Endothelial cell of umbilical vein (primary cell): ENCODE measurements at regions of chr11 and their contacts with region 1.

Region 1: DNA sequence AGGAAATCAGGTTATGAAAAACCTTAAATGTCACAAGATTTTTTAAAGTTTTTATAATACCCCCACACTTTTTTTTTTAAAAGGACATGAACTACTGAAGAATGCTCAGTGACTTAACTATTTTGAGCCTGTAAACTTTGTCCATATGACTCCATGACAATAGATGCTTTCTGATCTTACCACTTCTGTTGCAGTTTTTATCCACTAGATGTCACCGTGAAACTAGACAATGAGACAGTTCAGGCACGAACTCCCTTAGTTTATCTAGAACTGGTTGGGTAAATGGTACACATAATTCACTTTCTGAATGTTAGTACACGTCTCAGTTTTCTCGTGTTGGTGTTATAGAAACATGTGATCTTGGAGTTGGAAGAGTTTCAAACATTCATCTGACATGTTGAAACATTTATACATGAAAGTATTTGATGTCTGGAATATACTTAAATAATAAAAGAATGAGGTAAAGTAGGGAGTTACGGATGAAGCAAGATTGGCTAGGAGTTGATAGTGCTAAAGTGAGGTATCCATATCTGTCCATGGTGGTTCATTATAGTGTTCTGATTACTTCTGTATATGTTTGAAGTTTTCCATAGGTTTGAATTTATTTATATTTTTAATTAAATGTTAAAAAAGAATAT is 8.1 kb downstream of the CCDC15 start:
- DNase-seq: peak; percentile 86
- H3K4me3 ChIP-seq: no peak overlapping the region
- H3K27ac ChIP-seq: no peak overlapping the region
- H3K4me1 ChIP-seq: no peaks in the 10 kb centered on the region
- H3K27me3 ChIP-seq: no peaks in the 10 kb centered on the region
- CTCF ChIP-seq: peak; percentile 50 to 60
- POLR2A ChIP-seq: no peak

Region 2: DNA sequence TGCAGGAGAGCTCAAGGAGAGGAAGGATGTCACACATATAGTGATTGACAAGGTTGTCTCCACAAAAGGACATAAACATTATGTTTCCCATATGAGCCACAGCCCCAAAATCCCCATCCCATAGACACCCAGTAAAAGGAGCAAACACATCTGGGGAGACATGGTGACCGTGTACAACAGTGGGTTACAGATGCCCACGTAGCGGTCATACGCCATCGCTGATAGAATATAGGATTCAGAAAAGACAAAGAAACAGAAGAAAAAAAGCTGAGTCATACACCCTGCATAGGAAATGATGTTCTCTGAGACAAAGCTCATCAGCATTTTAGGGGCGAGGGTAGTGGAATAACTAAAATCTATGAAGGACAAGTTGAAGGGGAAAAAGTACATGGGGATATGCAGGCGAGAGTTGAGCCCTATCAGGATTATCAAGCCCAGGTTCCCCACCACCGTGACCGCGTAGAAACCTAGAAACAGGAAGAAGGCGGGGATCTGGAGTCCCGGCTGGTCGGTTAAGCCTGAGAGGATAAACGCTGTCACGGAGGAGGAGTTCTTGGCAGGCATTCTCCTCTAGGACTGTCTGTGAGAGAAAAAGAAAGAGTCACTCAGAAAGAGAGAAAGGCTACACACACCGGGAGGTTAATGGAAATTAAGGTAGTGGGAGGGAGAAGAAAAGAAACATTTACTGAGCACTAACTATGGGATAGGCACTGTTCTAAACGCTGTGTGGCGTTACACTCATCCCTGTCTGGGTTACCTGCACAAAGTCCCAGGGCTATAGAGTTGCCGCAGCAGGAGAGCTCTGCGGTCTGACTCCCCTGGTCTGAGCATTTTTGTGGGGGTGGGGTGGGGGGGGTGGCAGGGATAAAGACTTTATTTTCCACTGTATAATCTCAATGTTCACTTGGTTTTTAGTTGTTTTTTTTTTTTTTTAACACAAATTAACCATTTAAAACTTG is 480.4 kb before region 1 on chr11:
- CTCF ChIA-PET with region 1: no interaction called
- POLR2A ChIA-PET with region 1: no interaction called
- dilution Hi-C with region 1: no loop called
- intact Hi-C with region 1: loop called (anchors 5 kb)
- DNase-seq: peak; percentile 27
- H3K4me3 ChIP-seq: peak overlapping the region in 2 of 3 experiments; percentile 3 to 24
- H3K27ac ChIP-seq: peak overlapping the region; percentile 39
- H3K4me1 ChIP-seq: peaks cover 10% of the 10 kb centered on the region
- H3K27me3 ChIP-seq: peaks cover 0 to 7% of the 10 kb centered on the region in 2 experiments
- CTCF ChIP-seq: no peak
- POLR2A ChIP-seq: no peak

Region 3: DNA sequence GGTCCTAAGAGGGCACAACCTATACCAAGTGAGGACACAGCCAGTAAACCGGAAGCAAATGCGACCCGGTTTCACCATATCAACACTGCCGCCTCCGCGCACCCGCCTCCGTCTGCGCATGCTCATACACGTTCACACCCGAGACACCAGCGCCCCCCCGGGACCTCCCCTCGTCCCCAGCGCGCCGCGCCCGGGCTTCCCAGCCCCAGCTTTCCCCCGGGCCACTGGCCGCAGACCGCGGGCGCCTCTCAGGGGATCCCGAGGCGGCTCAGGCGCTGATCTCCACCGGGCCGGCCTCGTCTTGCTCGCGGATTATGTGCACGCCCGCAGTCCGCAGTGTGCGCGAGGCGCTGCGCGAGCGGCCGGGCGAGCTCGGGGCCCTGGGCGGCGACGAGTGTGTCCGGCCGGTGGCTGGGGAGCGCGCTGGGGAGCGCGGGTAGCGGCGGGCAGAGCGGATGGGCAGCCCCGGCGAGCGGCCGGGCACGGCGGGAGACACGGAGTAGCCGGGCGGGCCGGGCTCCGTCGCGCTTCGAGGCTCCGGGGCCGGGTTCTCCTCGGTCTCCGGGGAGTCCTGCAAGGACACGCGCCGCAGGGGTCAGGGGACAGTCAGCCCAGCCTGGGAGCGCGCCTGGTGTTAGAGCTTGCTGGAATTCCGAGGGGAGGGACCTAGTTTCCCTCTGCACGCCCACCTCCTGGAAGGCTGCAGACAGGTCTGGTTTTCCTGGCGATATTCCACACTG is 41.1 kb before region 1 on chr11:
- CTCF ChIA-PET with region 1: no interaction called
- POLR2A ChIA-PET with region 1: no interaction called
- dilution Hi-C with region 1: no loop called
- intact Hi-C with region 1: no loop called
- DNase-seq: peak; percentile 82
- H3K4me3 ChIP-seq: peak overlapping the region in 2 of 3 experiments; percentile 31 to 39
- H3K27ac ChIP-seq: peak overlapping the region; percentile 22
- H3K4me1 ChIP-seq: peaks cover 9% of the 10 kb centered on the region
- H3K27me3 ChIP-seq: no peaks in the 10 kb centered on the region
- CTCF ChIP-seq: no peak
- POLR2A ChIP-seq: peak; percentile 62

Region 4: GRCh38 chr11:124976994-124977393 is 14.9 kb after region 1 on chr11:
- CTCF ChIA-PET with region 1: no interaction called
- POLR2A ChIA-PET with region 1: no interaction called
- dilution Hi-C with region 1: no loop called
- intact Hi-C with region 1: no loop called
- DNase-seq: peak; percentile 11
- H3K4me3 ChIP-seq: no peak overlapping the region
- H3K27ac ChIP-seq: no peak overlapping the region
- H3K4me1 ChIP-seq: peaks cover 2% of the 10 kb centered on the region
- H3K27me3 ChIP-seq: no peaks in the 10 kb centered on the region
- CTCF ChIP-seq: no peak
- POLR2A ChIP-seq: no peak

Region 5: DNA sequence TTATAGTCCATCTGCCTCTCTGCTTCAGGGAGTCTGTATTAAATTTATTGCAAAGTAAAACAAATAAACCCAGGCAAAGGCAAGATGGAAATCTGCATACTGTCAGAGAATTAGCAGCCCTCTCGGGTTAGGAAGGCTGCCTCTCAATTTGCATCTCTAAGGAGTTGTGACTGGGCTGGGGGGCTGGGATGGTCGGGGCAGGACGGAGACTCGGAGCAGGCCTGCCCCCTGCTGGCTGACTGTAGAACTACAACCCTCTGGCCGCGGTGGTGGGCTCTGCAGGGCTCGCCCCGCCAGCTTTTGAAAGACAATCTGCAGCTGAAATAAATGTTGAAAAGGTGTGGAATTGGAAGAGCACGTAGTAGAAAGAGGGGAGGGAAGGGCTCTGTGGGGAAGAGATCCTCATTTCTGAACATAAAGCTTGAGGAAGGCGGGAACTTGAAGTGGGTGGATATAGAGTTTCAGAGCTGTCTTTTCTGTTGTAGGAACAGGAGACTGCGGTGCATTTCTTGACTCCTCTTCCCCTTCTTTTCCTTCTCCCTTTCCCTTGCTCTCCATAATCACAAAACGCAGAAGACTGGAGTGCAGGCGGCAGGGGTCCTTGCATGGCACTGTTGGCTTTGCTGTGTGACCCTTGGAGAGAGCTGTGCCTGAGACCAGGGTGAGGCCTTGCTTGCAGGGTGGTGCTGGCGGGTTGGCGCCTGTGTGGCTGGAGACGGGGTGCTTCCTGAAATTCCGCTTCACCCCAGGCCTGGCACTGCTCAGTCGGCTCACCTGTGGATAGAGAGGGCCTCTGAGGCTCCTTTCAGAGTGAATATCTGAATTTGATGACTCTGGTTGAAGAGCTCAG is 179.8 kb after region 1 on chr11:
- CTCF ChIA-PET with region 1: interaction called, 35 read pairs
- POLR2A ChIA-PET with region 1: no interaction called
- dilution Hi-C with region 1: no loop called
- intact Hi-C with region 1: loop called (anchors 1 kb)
- DNase-seq: peak; percentile 52
- H3K4me3 ChIP-seq: no peak overlapping the region
- H3K27ac ChIP-seq: no peak overlapping the region
- H3K4me1 ChIP-seq: no peaks in the 10 kb centered on the region
- H3K27me3 ChIP-seq: peaks cover 0 to 10% of the 10 kb centered on the region in 2 experiments
- CTCF ChIP-seq: peak; percentile 90 to 95
- POLR2A ChIP-seq: no peak

Region 6: GRCh38 chr11:125429166-125429707 is 467.1 kb after region 1 on chr11:
- CTCF ChIA-PET with region 1: interaction called, 3 read pairs
- POLR2A ChIA-PET with region 1: no interaction called
- dilution Hi-C with region 1: no loop called
- intact Hi-C with region 1: loop called (anchors 1 kb)
- DNase-seq: peak; percentile 59
- H3K4me3 ChIP-seq: no peak overlapping the region
- H3K27ac ChIP-seq: no peak overlapping the region
- H3K4me1 ChIP-seq: no peaks in the 10 kb centered on the region
- H3K27me3 ChIP-seq: no peaks in the 10 kb centered on the region
- CTCF ChIP-seq: peak; percentile 70 to 81
- POLR2A ChIP-seq: no peak

Region 7: DNA sequence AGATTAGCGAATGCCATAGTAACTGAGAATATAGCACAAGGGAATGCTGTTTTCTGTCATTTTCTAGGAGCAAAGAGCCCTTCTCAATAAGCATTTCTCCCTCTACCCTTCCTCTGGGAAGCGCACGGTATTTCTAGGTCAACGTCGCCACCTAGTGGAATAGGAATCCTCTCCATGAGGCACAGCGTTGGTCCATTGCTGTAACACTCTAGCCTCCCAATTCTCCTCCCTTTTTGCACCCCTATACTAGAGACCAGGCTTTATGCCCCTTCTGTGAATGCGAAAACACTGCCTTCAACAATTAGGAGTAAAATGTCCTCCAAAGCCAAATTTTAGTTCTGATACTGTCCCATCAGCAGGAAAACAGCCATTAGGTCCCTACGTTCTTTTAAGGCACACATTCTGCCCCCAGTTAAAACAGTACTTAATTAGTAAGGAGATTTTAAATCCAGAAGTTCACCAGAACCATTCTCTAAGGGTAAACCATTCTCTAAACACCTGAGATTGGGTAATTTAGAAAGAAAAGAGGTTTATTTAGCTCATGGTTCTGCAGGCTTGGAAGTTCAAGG is 912.5 kb after region 1 on chr11:
- CTCF ChIA-PET with region 1: no interaction called
- POLR2A ChIA-PET with region 1: no interaction called
- dilution Hi-C with region 1: no loop called
- intact Hi-C with region 1: loop called (anchors 2 kb)
- DNase-seq: peak; percentile 66
- H3K4me3 ChIP-seq: no peak overlapping the region
- H3K27ac ChIP-seq: no peak overlapping the region
- H3K4me1 ChIP-seq: no peaks in the 10 kb centered on the region
- H3K27me3 ChIP-seq: no peaks in the 10 kb centered on the region
- CTCF ChIP-seq: peak; percentile 70 to 77
- POLR2A ChIP-seq: no peak